PC-3 (cell line): ENCODE measurements at regions of chr6 and their contacts with region 1.

Region 1: GRCh38 chr6:108594640-108595039 is 33.9 kb downstream of the FOXO3 start:
- DNase-seq: peak; percentile 13
- ATAC-seq: no peak
- H3K4me3 ChIP-seq: no peak overlapping the region
- H3K27ac ChIP-seq: no peak overlapping the region
- H3K4me1 ChIP-seq: peaks cover 8% of the 10 kb centered on the region
- H3K27me3 ChIP-seq: no peaks in the 10 kb centered on the region
- CTCF ChIP-seq: no peak

Region 2: DNA sequence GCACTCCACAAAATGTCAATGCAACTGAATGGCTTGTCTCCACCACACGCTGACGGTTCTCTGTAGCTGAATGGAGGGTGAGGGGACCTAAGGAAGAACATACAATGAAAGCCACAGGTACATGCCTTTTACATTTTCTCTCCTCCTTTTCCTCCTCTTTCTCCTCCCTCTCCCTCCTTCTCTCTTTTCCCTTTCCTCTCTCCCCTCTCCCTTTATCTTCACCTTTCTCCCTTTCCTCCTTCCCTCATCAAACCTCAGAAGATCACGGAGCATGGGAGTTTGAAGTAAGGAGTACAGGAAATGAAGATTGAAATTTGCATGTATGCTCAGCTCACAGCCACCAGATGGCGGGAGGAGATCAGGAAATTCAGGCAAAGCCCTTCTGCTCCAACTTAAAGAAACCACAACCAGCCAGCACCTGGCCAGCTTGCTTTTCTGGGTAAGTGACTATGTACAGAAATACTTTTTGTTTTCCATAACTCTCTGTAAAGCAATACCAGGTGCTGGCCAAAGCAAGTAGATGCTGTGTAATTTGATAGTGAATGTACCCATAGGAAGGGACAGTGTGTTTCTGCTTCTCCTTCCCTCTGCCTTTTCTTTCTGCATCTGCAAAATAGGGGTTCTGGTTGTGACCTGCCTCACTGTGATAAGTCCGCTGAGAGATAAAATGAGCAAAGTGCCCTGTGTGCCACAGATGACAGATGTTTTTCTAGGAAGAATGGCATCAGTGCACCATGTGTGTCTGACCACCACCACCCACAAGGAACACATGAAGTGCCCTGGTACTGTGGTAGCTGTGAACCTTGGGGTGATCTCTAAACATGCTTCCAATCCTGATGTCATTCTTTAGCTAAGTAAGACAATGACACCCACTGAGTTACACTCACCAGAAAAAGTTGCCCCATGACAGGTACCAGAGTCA is 52.5 kb before region 1 on chr6:
- CTCF ChIA-PET with region 1: no interaction called
- POLR2A ChIA-PET with region 1: no interaction called
- intact Hi-C with region 1: no loop called
- DNase-seq: peak; percentile 76
- ATAC-seq: peak; percentile 71
- H3K4me3 ChIP-seq: peak overlapping the region; percentile 40; the same call in 1 of the 2 replicates
- H3K27ac ChIP-seq: no peak overlapping the region
- H3K4me1 ChIP-seq: 0 out of 2 replicates have a peak, but pooled peaks cover 4% of the 10 kb centered on the region
- H3K27me3 ChIP-seq: no peaks in the 10 kb centered on the region
- CTCF ChIP-seq: peak; percentile 85

Region 3: DNA sequence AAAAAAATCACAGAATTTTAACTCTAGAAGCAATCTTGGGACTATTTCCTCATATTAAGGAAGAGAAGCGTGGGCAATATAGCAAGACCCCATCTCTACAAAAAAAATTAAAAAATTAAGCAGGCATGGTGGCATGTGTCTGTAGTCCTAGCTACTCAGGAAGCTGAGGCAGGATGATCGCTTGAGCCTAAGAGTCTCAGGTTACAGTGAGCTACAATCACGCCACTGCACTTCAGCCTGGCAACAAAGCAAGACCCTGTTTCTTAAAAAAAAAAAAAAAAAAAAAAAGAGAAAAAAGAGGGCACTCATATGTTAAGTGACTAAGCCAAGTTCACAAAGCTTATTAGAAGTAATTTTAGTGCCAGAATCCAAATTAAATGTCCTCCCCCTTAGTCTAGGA is 399.2 kb after region 1 on chr6:
- CTCF ChIA-PET with region 1: no interaction called
- POLR2A ChIA-PET with region 1: interaction called, 19 read pairs
- intact Hi-C with region 1: no loop called
- DNase-seq: no peak
- ATAC-seq: no peak
- H3K4me3 ChIP-seq: no peak overlapping the region
- H3K27ac ChIP-seq: no peak overlapping the region
- H3K4me1 ChIP-seq: peaks cover 25% of the 10 kb centered on the region
- H3K27me3 ChIP-seq: no peaks in the 10 kb centered on the region
- CTCF ChIP-seq: no peak